ENCODE measurements at regions of chr12 and their contacts with region 1.

Region 1: GRCh38 chr12:116924558-116925453 is 14.1 kb downstream of the FBXW8 start:
- DNase-seq: peak; percentile 83 to 90 (median 85)
- H3K4me3 ChIP-seq: no peak overlapping the region
- H3K4me3 Mint-ChIP-seq: peak overlapping the region in 7 of 8 donors; percentile 45 to 86 (median 77)
- H3K27ac ChIP-seq: no peak overlapping the region
- H3K27ac Mint-ChIP-seq: peak overlapping the region; percentile 78 to 93 (median 86)
- H3K4me1 ChIP-seq: peaks cover 69% of the 10 kb centered on the region
- H3K4me1 Mint-ChIP-seq: peaks cover 48 to 75% (median 62%) of the 10 kb centered on the region in 4 donors
- H3K27me3 ChIP-seq: no peaks in the 10 kb centered on the region
- H3K27me3 Mint-ChIP-seq: no peaks in the 10 kb centered on the region

Region 2: DNA sequence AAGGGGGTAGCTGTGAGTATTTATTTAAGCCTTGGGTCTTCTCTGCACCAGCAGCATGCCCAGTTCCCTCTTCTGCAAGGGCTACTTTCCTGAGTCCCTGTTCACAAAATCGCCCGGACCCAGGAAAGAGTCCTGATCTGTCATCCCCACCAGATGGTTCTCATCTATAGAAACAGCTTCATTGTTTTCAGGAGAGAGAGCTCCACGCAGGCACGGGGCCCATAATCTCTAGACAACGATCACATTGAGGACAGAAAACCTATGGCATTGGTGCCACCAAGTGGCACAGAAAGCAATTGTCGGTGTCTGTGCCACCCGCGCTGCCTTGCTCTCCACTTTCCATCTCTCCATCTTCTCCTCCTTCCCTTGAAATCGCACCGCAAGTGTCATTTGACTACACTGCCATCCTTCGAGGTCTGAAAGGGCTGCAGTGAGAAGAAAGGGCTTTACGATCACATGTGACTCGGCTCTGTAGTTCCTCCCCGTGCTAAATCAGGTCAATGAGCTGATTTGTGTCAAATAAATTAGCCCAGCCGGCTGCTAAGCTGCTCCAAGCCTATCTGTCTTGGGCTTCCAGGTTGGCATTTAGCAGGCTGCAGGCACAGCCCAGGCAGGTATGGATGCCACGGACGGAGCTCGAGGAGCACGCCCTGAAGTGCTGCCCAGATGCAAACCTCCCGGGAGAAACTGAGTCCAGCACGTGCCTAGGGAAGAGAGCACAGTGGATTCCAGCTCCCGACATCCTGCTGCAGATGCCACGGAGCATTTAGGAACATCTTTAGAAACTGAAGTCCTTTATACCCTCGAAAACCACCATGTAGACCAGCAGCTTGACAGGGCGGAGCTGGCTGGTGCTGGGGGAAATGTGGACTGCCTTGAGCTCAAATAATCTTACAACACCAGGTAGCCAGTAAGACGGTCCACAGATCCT is 215.7 kb before region 1 on chr12:
- CTCF ChIA-PET with region 1: no interaction called
- POLR2A ChIA-PET with region 1: no interaction called
- intact Hi-C with region 1: no loop called
- DNase-seq: peak in 4 of 5 donors; percentile 41 to 49 (median 42)
- H3K4me3 ChIP-seq: no peak overlapping the region
- H3K4me3 Mint-ChIP-seq: peak overlapping the region in 6 of 8 donors; percentile 35 to 81 (median 72)
- H3K27ac ChIP-seq: no peak overlapping the region
- H3K27ac Mint-ChIP-seq: peak overlapping the region in 1 of 7 donors; percentile 57
- H3K4me1 ChIP-seq: peaks cover 11% of the 10 kb centered on the region
- H3K4me1 Mint-ChIP-seq: peaks cover 8 to 13% (median 10%) of the 10 kb centered on the region in 4 donors
- H3K27me3 ChIP-seq: peaks cover 5% of the 10 kb centered on the region
- H3K27me3 Mint-ChIP-seq: peaks cover 1 to 2% of the 10 kb centered on the region in 2 donors

Region 3: GRCh38 chr12:116818948-116819832 is 105.6 kb before region 1 on chr12:
- CTCF ChIA-PET with region 1: no interaction called
- POLR2A ChIA-PET with region 1: interaction called, 3 read pairs
- intact Hi-C with region 1: loop called (anchors 1 kb)
- DNase-seq: peak; percentile 92 to 93 (median 93)
- H3K4me3 ChIP-seq: peak overlapping the region; percentile 67 to 86
- H3K4me3 Mint-ChIP-seq: peak overlapping the region; percentile 92 to 96 (median 93)
- H3K27ac ChIP-seq: peak overlapping the region; percentile 87
- H3K27ac Mint-ChIP-seq: peak overlapping the region; percentile 96 to 100 (median 98)
- H3K4me1 ChIP-seq: peaks cover 17% of the 10 kb centered on the region
- H3K4me1 Mint-ChIP-seq: peaks cover 10 to 31% (median 22%) of the 10 kb centered on the region in 4 donors
- H3K27me3 ChIP-seq: no peaks in the 10 kb centered on the region
- H3K27me3 Mint-ChIP-seq: peaks cover 0 to 2% of the 10 kb centered on the region in 2 donors

Region 4: GRCh38 chr12:116910645-116911451 is 14.0 kb before region 1 on chr12 and contains the start of gene FBXW8:
- CTCF ChIA-PET with region 1: interaction called, 3 read pairs
- POLR2A ChIA-PET with region 1: interaction called, 7 read pairs
- intact Hi-C with region 1: loop called (anchors 2 kb)
- DNase-seq: peak; percentile 36 to 55 (median 50)
- H3K4me3 ChIP-seq: peak within 1 kb of the TSS; percentile 30 to 54
- H3K4me3 Mint-ChIP-seq: peak within 1 kb of the TSS; percentile 87 to 98 (median 94)
- H3K27ac ChIP-seq: peak within 1 kb of the TSS; percentile 33
- H3K27ac Mint-ChIP-seq: peak within 1 kb of the TSS in 6 of 7 donors; percentile 9 to 93 (median 86)
- H3K4me1 ChIP-seq: peaks cover 11% of the 10 kb centered on the region
- H3K4me1 Mint-ChIP-seq: peaks cover 17 to 36% (median 27%) of the 10 kb centered on the region in 4 donors
- H3K27me3 ChIP-seq: peaks cover 5% of the 10 kb centered on the region
- H3K27me3 Mint-ChIP-seq: peaks cover 3 to 5% of the 10 kb centered on the region in 2 donors
- total RNA-seq, gene FBXW8: 9.3 to 10.2 TPM

Measured in CD4-positive, alpha-beta memory T cell (primary cell).